SK-N-SH (cell line): ENCODE measurements at regions of chr17 and their contacts with region 1.

Region 1: DNA sequence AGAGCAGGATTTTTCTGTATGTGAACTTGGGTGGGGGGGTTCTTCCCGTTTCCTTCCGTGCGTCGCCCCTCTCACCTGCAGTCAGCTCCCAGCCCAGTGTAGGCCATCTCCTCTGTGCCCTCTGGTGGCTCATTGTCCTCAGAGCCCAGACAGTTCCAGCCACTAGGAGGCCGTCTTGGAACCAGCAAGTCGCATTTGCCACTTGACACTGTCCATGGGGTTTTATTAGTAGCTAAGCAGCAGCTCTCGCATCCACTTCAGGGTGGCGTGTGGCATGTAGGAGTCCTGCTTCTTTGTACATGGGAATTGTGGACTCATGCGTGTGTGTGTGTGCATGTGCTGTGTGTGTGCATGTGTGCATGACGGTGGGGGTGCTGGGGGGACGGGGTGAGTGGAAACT is 74.0 kb downstream of the SEC14L1 start:
- DNase-seq: peak; percentile 77
- H3K4me3 ChIP-seq: no peak overlapping the region
- H3K27ac ChIP-seq: no peak overlapping the region
- H3K4me1 ChIP-seq: no peaks in the 10 kb centered on the region
- H3K27me3 ChIP-seq: no peaks in the 10 kb centered on the region
- CTCF ChIP-seq: peak; percentile 65
- EP300 ChIP-seq: no peak
- RAD21 ChIP-seq: peak; percentile 66

Region 2: GRCh38 chr17:77227461-77228237 is 12.9 kb after region 1 on chr17:
- CTCF ChIA-PET with region 1: interaction called, 22 read pairs
- POLR2A ChIA-PET with region 1: no interaction called
- DNase-seq: no peak
- H3K4me3 ChIP-seq: no peak overlapping the region
- H3K27ac ChIP-seq: no peak overlapping the region
- H3K4me1 ChIP-seq: no peaks in the 10 kb centered on the region; a peak in 1 of 4 replicates
- H3K27me3 ChIP-seq: no peaks in the 10 kb centered on the region
- CTCF ChIP-seq: no peak
- EP300 ChIP-seq: no peak
- RAD21 ChIP-seq: no peak

Region 3: GRCh38 chr17:77235370-77235941 is 20.7 kb after region 1 on chr17:
- CTCF ChIA-PET with region 1: interaction called, 22 read pairs
- POLR2A ChIA-PET with region 1: no interaction called
- DNase-seq: peak; percentile 71
- H3K4me3 ChIP-seq: peak overlapping the region; percentile 7 to 42; a peak in 3 of 4 replicates
- H3K27ac ChIP-seq: peak overlapping the region; percentile 45 to 81
- H3K4me1 ChIP-seq: peaks cover 3 to 15% of the 10 kb centered on the region in 2 experiments; a peak in 2 of 4 replicates
- H3K27me3 ChIP-seq: no peaks in the 10 kb centered on the region
- CTCF ChIP-seq: no peak
- EP300 ChIP-seq: peak in 1 of 2 experiments; percentile 76; a peak in 2 of 4 replicates
- RAD21 ChIP-seq: no peak

Region 4: GRCh38 chr17:77741109-77741508 is 526.4 kb after region 1 on chr17:
- CTCF ChIA-PET with region 1: no interaction called
- POLR2A ChIA-PET with region 1: no interaction called
- DNase-seq: no peak
- H3K4me3 ChIP-seq: no peak overlapping the region; a peak in 1 of 4 replicates
- H3K27ac ChIP-seq: no peak overlapping the region
- H3K4me1 ChIP-seq: peaks cover 0 to 9% of the 10 kb centered on the region in 2 experiments; a peak in 1 of 4 replicates
- H3K27me3 ChIP-seq: peaks cover 15% of the 10 kb centered on the region; the same call in 1 of the 2 replicates
- CTCF ChIP-seq: peak; percentile 51
- EP300 ChIP-seq: no peak
- RAD21 ChIP-seq: no peak